ENCODE measurements at regions of chr15 and their contacts with region 1.

Region 1: DNA sequence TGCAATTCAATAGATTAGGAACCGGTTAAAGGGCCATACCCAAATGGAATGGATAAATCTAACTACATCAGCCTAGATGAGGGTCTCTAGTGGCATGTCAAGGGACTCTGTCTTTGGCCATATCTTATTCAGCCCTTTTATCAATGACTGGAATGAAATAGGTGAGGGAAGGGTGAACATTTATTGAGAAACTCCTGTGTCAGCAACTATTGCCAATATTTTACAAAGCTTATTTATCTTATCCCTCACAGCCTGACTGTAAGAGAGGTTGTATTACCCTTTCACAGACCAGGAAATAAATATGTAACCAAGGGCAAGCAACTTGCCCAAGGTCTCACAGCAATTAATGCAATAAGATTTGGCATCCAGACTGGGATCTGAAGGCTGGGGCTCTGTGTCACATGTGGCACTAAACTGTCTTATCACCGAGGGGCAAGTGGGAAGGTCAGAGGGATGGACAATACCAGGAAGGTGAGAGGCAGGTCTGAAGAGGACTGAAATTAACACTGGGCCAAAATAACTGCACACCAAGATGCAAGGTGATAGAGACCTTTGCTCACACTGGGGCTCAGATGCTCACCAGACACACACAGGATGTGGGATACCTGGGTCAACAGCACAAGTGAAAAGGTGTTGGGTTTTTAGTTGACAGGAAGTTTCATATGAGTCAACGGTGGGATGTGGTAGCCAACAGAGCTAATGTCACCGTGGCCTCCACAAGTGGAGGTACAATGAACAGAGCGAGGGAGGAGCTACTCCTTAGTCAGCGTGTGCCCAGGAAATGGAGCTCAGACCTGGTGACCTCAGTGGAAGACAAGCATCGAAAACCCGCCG is 261.3 kb downstream of the RPLP1 start:
- DNase-seq: peak; percentile 40 to 95 (median 66)
- ATAC-seq: peak; percentile 93
- H3K4me3 ChIP-seq: peak overlapping the region; percentile 12
- H3K4me3 Mint-ChIP-seq: peak overlapping the region; percentile 32
- H3K27ac ChIP-seq: peak overlapping the region; percentile 32 to 44
- H3K27ac Mint-ChIP-seq: peak overlapping the region; percentile 78
- H3K4me1 ChIP-seq: peaks cover 46% of the 10 kb centered on the region
- H3K4me1 Mint-ChIP-seq: peaks cover 49% of the 10 kb centered on the region
- H3K27me3 ChIP-seq: no peaks in the 10 kb centered on the region
- H3K27me3 Mint-ChIP-seq: no peaks in the 10 kb centered on the region
- CTCF ChIP-seq: no peak

Region 2: GRCh38 chr15:69468241-69469121 is 245.5 kb before region 1 on chr15:
- CTCF ChIA-PET with region 1: no interaction called
- POLR2A ChIA-PET with region 1: interaction called, 4 read pairs
- intact Hi-C with region 1: loop called in 1 of 2 experiments (anchors 2 kb)
- DNase-seq: peak; percentile 74 to 97 (median 81)
- ATAC-seq: peak; percentile 88
- H3K4me3 ChIP-seq: peak overlapping the region; percentile 15
- H3K4me3 Mint-ChIP-seq: peak overlapping the region; percentile 70
- H3K27ac ChIP-seq: peak overlapping the region; percentile 91
- H3K27ac Mint-ChIP-seq: peak overlapping the region; percentile 90
- H3K4me1 ChIP-seq: peaks cover 39% of the 10 kb centered on the region
- H3K4me1 Mint-ChIP-seq: peaks cover 29% of the 10 kb centered on the region
- H3K27me3 ChIP-seq: no peaks in the 10 kb centered on the region
- H3K27me3 Mint-ChIP-seq: no peaks in the 10 kb centered on the region
- CTCF ChIP-seq: no peak

Region 3: GRCh38 chr15:69568173-69569020 is 145.5 kb before region 1 on chr15:
- CTCF ChIA-PET with region 1: no interaction called
- POLR2A ChIA-PET with region 1: no interaction called
- intact Hi-C with region 1: no loop called
- DNase-seq: no peak
- ATAC-seq: no peak
- H3K4me3 ChIP-seq: no peak overlapping the region
- H3K4me3 Mint-ChIP-seq: no peak overlapping the region
- H3K27ac ChIP-seq: no peak overlapping the region
- H3K27ac Mint-ChIP-seq: no peak overlapping the region
- H3K4me1 ChIP-seq: no peaks in the 10 kb centered on the region
- H3K4me1 Mint-ChIP-seq: peaks cover 1% of the 10 kb centered on the region
- H3K27me3 ChIP-seq: no peaks in the 10 kb centered on the region
- H3K27me3 Mint-ChIP-seq: no peaks in the 10 kb centered on the region
- CTCF ChIP-seq: no peak

Region 4: GRCh38 chr15:69697916-69698315 is 16.0 kb before region 1 on chr15:
- CTCF ChIA-PET with region 1: no interaction called
- POLR2A ChIA-PET with region 1: no interaction called
- intact Hi-C with region 1: no loop called
- DNase-seq: peak in 1 of 14 experiments; percentile 35
- ATAC-seq: no peak
- H3K4me3 ChIP-seq: no peak overlapping the region
- H3K4me3 Mint-ChIP-seq: no peak overlapping the region
- H3K27ac ChIP-seq: no peak overlapping the region
- H3K27ac Mint-ChIP-seq: no peak overlapping the region
- H3K4me1 ChIP-seq: no peaks in the 10 kb centered on the region
- H3K4me1 Mint-ChIP-seq: no peaks in the 10 kb centered on the region
- H3K27me3 ChIP-seq: no peaks in the 10 kb centered on the region
- H3K27me3 Mint-ChIP-seq: no peaks in the 10 kb centered on the region
- CTCF ChIP-seq: no peak